Heart right ventricle (tissue), 16 donors: ENCODE measurements at regions of chr18 and their contacts with region 1.

Region 1: DNA sequence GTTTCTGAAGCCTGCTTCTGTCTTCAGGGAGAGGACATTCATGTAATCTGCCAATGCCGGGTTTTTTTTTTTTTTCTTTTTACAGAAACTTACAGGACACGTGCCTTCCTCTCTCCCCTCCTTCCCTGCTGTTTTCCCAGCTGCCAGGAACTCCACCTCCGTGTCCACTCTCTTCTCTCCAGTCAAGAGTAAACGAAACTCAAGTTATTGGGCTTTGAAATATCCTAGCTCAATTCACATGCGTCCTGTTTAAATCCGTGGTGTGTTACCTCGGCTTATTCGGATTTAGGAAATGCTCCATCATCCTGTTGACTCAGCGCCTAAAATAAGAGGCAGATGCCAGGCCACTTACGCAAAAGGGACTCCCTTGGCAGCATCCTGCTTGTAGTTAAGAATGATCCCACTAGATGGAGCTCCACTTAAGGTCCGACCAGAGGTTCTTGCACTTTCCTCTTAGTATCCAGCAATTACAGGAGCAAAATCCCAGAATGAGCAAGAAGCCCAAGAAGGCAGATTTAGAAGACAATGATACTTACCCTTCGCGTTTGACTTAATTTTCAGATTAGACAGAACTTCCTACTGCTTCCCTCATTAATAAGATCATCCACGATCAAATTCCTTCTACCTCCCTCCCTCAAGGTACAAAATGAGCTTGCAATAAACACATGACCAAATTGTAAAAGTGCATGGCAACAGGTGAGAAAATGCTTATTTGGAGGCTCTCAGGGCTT is 97.2 kb upstream of the ZCCHC2 start:
- DNase-seq: peak in 1 of 2 donors; percentile 94
- ATAC-seq: peak; percentile 90 to 95 (median 94)
- H3K4me3 ChIP-seq: peak overlapping the region in 9 of 10 donors; percentile 14 to 50 (median 38)
- H3K27ac ChIP-seq: peak overlapping the region; percentile 43 to 92 (median 87)
- H3K4me1 ChIP-seq: peaks cover 2 to 32% (median 14%) of the 10 kb centered on the region in 9 donors
- H3K27me3 ChIP-seq: no peaks in the 10 kb centered on the region
- CTCF ChIP-seq: peak; percentile 67 to 90 (median 86)

Region 2: GRCh38 chr18:62186774-62187542 is 238.7 kb before region 1 on chr18 and contains the starts of genes PIGN and RELCH:
- intact Hi-C with region 1: loop called in 1 of 10 experiments (anchors 5 kb)
- DNase-seq: peak; percentile 90 to 98
- ATAC-seq: peak; percentile 98 to 99 (median 99)
- H3K4me3 ChIP-seq: peak within 1 kb of the TSS; percentile 72 to 100 (median 94)
- H3K27ac ChIP-seq: peak within 1 kb of the TSS; percentile 56 to 91 (median 83)
- H3K4me1 ChIP-seq: peaks cover 0 to 53% (median 31%) of the 10 kb centered on the region in 9 donors
- H3K27me3 ChIP-seq: no peaks in the 10 kb centered on the region
- CTCF ChIP-seq: no peak
- total RNA-seq, gene PIGN: 14.4 to 31.6 (median 21.2) TPM
- total RNA-seq, gene RELCH: 12.1 to 21.0 (median 16.5) TPM

Region 3: GRCh38 chr18:62312851-62313250 is 112.8 kb before region 1 on chr18:
- intact Hi-C with region 1: no loop called
- DNase-seq: no peak
- ATAC-seq: no peak
- H3K4me3 ChIP-seq: no peak overlapping the region
- H3K27ac ChIP-seq: no peak overlapping the region
- H3K4me1 ChIP-seq: no peaks in the 10 kb centered on the region
- H3K27me3 ChIP-seq: no peaks in the 10 kb centered on the region
- CTCF ChIP-seq: no peak

Region 4: DNA sequence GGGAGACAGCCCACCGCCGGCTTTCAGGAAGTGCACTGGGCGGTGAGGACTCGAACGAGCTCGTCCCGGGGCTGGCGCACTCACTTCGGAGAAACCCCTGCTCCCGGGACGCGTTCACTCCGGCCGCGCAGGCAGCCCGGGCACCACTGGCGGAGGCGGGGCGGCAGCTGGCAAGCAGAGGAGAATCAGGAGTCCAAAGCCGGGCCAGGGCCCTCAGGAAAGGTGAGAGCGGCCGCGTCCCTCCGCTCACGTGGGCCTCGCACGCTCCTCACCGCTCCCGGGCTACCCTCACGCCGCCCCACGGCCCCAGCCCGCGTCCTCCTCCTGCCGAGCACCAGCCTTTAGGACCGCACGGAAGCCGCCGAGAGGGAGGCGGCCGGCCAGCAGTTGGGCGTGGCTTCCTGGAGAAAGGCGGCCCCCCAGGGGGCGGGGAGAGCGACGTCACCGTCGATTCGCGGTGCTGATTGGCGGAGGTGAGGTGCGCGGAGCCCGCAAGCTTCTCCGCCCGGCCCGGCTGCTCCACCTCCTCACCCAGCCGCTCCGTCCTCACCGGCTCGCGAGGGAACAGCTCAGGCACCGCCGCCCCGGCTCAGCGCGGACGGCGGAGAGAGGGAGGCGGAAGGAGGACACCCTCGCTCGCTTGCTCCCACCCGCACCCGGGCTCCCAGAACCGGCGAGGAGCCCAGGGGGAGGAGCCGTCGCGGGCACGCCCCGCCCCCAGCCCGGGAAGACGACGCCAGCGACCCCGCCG is 97.0 kb after region 1 on chr18 and contains the start of gene ZCCHC2:
- intact Hi-C with region 1: loop called in 9 of 10 experiments (anchors 2 to 5 kb)
- DNase-seq: peak; percentile 98 to 99
- ATAC-seq: peak; percentile 85 to 94 (median 93)
- H3K4me3 ChIP-seq: peak within 1 kb of the TSS; percentile 77 to 98 (median 92)
- H3K27ac ChIP-seq: peak within 1 kb of the TSS; percentile 96 to 100 (median 99)
- H3K4me1 ChIP-seq: peaks cover 0 to 37% (median 28%) of the 10 kb centered on the region in 9 donors
- H3K27me3 ChIP-seq: no peaks in the 10 kb centered on the region
- CTCF ChIP-seq: no peak
- total RNA-seq, gene ZCCHC2: 15.1 to 45.3 (median 20.1) TPM

Region 5: DNA sequence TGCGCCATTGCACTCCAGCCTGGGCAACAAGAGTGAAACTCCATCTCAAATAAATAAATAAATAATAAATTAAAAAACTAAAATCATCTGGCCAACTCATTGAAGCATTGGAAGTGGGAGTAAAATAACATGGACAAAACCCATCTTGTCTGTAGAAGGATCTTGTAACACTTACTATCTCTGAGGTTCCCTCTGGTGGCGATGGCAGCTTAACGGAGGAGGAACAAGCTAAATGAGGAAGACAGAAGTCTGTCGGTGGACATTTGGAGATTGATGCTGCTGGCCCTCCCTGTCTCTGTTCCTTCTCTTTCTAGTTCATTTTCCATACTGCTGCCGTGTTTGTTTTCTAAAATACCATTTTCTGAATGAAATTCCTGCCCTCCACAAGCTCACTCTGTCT is 140.6 kb after region 1 on chr18:
- intact Hi-C with region 1: loop called in 2 of 10 experiments (anchors 5 kb)
- DNase-seq: peak in 1 of 2 donors; percentile 37
- ATAC-seq: peak in 2 of 8 donors; percentile 56 to 57
- H3K4me3 ChIP-seq: no peak overlapping the region
- H3K27ac ChIP-seq: no peak overlapping the region
- H3K4me1 ChIP-seq: no peaks in the 10 kb centered on the region
- H3K27me3 ChIP-seq: no peaks in the 10 kb centered on the region
- CTCF ChIP-seq: peak in 7 of 9 donors; percentile 29 to 51 (median 49)

Region 6: GRCh38 chr18:62576845-62577512 is 151.3 kb after region 1 on chr18:
- intact Hi-C with region 1: loop called in 5 of 10 experiments (anchors 5 kb)
- DNase-seq: no peak
- ATAC-seq: peak in 2 of 8 donors; percentile 22 to 37
- H3K4me3 ChIP-seq: peak overlapping the region in 1 of 10 donors; percentile 3
- H3K27ac ChIP-seq: peak overlapping the region in 1 of 10 donors; percentile 74
- H3K4me1 ChIP-seq: peaks cover 0 to 5% (median 0%) of the 10 kb centered on the region in 9 donors
- H3K27me3 ChIP-seq: no peaks in the 10 kb centered on the region
- CTCF ChIP-seq: no peak

Region 7: GRCh38 chr18:62584241-62585120 is 158.9 kb after region 1 on chr18:
- intact Hi-C with region 1: loop called in 8 of 10 experiments (anchors 1 to 5 kb)
- DNase-seq: peak; percentile 75 to 89
- ATAC-seq: peak; percentile 72 to 91 (median 87)
- H3K4me3 ChIP-seq: peak overlapping the region in 4 of 10 donors; percentile 9 to 25 (median 20)
- H3K27ac ChIP-seq: peak overlapping the region in 7 of 10 donors; percentile 19 to 53 (median 39)
- H3K4me1 ChIP-seq: peaks cover 0 to 30% (median 16%) of the 10 kb centered on the region in 9 donors
- H3K27me3 ChIP-seq: no peaks in the 10 kb centered on the region
- CTCF ChIP-seq: peak; percentile 91 to 98 (median 94)

Region 8: DNA sequence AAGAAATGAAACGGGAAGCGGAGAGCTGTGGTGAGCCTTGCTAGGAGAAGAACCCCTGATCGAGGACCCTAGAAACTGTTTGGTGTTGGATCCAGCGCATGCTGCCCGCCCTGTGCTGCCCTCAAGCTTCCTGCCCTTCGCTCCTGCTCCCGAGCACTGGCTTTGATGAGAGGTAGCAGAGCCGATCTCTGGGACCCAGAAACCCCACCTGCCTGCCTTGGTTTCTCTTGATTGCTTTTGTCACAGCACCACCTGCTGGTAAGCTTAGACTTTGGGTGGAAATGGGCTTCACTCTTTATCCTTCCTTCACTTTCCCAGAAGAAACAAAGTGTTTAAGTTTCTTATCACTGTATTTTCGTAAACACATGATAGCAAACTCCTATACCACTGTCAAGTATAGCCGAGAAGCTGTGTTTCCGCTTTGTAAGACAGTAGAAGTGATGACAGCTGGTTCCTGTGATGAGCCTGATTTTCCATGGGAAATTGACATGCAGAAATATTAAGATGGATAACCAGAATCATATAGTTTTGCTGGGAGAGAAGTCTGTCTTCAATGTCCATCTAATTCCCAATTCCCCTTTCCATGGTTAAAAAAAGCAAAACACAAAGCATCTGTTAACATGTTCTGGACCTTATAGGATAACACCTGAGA is 557.1 kb after region 1 on chr18:
- intact Hi-C with region 1: loop called in 2 of 10 experiments (anchors 5 kb)
- DNase-seq: peak in 1 of 2 donors; percentile 61
- ATAC-seq: peak; percentile 63 to 87 (median 72)
- H3K4me3 ChIP-seq: peak overlapping the region in 8 of 10 donors; percentile 6 to 53 (median 42)
- H3K27ac ChIP-seq: no peak overlapping the region
- H3K4me1 ChIP-seq: peaks cover 0 to 20% (median 4%) of the 10 kb centered on the region in 9 donors
- H3K27me3 ChIP-seq: no peaks in the 10 kb centered on the region
- CTCF ChIP-seq: peak; percentile 43 to 88 (median 83)